AG04450 (cell line): ENCODE measurements at regions of chr3 and their contacts with region 1.

Region 1: DNA sequence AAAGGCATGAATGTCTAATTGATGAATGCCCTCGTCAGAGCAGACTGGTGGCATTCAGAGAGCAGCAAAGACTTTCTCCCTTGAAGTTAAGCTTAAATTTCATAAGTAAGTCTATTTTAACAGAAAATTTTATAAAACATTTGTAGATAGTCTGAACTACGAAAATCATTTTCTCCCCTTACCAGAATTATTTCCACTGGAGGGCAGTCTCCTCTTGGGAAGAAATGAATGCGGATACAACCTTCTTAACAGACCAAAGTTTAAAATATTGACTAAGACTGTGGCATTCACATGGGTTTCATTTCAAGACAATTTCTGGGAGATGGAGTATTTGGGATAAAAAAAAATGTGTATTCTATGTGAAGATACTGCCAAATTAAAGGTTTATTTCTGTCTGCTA is 669.0 kb downstream of the FHIT start:
- DNase-seq: no peak
- H3K4me3 ChIP-seq: no peak overlapping the region
- H3K27ac ChIP-seq: no peak overlapping the region
- H3K27me3 ChIP-seq: no peaks in the 10 kb centered on the region
- CTCF ChIP-seq: peak; percentile 16; the same call in 1 of the 2 replicates

Region 2: GRCh38 chr3:60571511-60571910 is 10.8 kb before region 1 on chr3:
- CTCF ChIA-PET with region 1: no interaction called
- POLR2A ChIA-PET with region 1: no interaction called
- DNase-seq: no peak
- H3K4me3 ChIP-seq: no peak overlapping the region
- H3K27ac ChIP-seq: no peak overlapping the region
- H3K27me3 ChIP-seq: no peaks in the 10 kb centered on the region
- CTCF ChIP-seq: no peak

Region 3: GRCh38 chr3:60636846-60637245 is 54.6 kb after region 1 on chr3:
- CTCF ChIA-PET with region 1: no interaction called
- POLR2A ChIA-PET with region 1: no interaction called
- DNase-seq: no peak
- H3K4me3 ChIP-seq: no peak overlapping the region
- H3K27ac ChIP-seq: no peak overlapping the region
- H3K27me3 ChIP-seq: no peaks in the 10 kb centered on the region
- CTCF ChIP-seq: no peak

Region 4: DNA sequence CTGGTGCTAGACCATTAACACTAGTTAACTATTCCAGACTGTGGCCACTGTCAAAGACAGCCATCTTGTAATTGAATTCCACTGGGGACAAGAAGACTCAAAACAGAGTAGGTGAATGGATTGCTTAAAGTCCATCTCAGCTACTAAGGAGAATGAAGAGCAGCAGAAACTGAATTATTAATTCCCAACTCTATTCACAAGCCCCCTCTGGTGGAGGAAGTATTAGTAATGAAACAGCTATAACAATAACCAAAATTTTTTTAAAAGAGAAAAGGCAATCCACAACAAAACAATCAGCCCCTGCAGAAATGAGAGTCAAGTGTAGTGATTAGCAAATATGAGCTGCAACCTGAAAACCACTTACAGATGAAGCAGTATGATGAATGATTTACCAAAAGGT is 366.2 kb after region 1 on chr3:
- CTCF ChIA-PET with region 1: interaction called, 10 read pairs
- POLR2A ChIA-PET with region 1: no interaction called
- DNase-seq: no peak
- H3K4me3 ChIP-seq: no peak overlapping the region
- H3K27ac ChIP-seq: no peak overlapping the region
- H3K27me3 ChIP-seq: no peaks in the 10 kb centered on the region
- CTCF ChIP-seq: peak; percentile 50